ENCODE measurements at regions of chr12 and their contacts with region 1.

Region 1: GRCh38 chr12:49060237-49061156 is at the start of gene KMT2D:
- DNase-seq: peak; percentile 89 to 93 (median 92)
- H3K4me3 ChIP-seq: peak within 1 kb of the TSS; percentile 93 to 97
- H3K4me3 Mint-ChIP-seq: peak within 1 kb of the TSS; percentile 94 to 96 (median 95)
- H3K27ac ChIP-seq: peak within 1 kb of the TSS; percentile 90
- H3K27ac Mint-ChIP-seq: peak within 1 kb of the TSS; percentile 95 to 99 (median 98)
- H3K4me1 ChIP-seq: peaks cover 47% of the 10 kb centered on the region
- H3K4me1 Mint-ChIP-seq: peaks cover 43 to 60% (median 49%) of the 10 kb centered on the region in 4 donors
- H3K27me3 ChIP-seq: no peaks in the 10 kb centered on the region
- H3K27me3 Mint-ChIP-seq: no peaks in the 10 kb centered on the region
- total RNA-seq, gene KMT2D: 133 to 159 TPM

Region 2: GRCh38 chr12:48995061-48995879 is 65.2 kb before region 1 on chr12:
- CTCF ChIA-PET with region 1: no interaction called
- POLR2A ChIA-PET with region 1: interaction called, 4 read pairs
- intact Hi-C with region 1: loop called (anchors 5 kb)
- DNase-seq: peak; percentile 31 to 53 (median 40)
- H3K4me3 ChIP-seq: no peak overlapping the region
- H3K4me3 Mint-ChIP-seq: peak overlapping the region in 6 of 8 donors; percentile 47 to 92 (median 69)
- H3K27ac ChIP-seq: no peak overlapping the region
- H3K27ac Mint-ChIP-seq: peak overlapping the region in 5 of 7 donors; percentile 51 to 93 (median 89)
- H3K4me1 ChIP-seq: peaks cover 40% of the 10 kb centered on the region
- H3K4me1 Mint-ChIP-seq: peaks cover 13 to 44% (median 25%) of the 10 kb centered on the region in 4 donors
- H3K27me3 ChIP-seq: peaks cover 18% of the 10 kb centered on the region
- H3K27me3 Mint-ChIP-seq: peaks cover 34 to 43% of the 10 kb centered on the region in 2 donors

Region 3: GRCh38 chr12:49049566-49050413 is 10.7 kb before region 1 on chr12:
- CTCF ChIA-PET with region 1: interaction called, 26 read pairs
- POLR2A ChIA-PET with region 1: interaction called, 3 read pairs
- intact Hi-C with region 1: no loop called
- DNase-seq: no peak
- H3K4me3 ChIP-seq: no peak overlapping the region
- H3K4me3 Mint-ChIP-seq: no peak overlapping the region
- H3K27ac ChIP-seq: no peak overlapping the region
- H3K27ac Mint-ChIP-seq: no peak overlapping the region
- H3K4me1 ChIP-seq: peaks cover 3% of the 10 kb centered on the region
- H3K4me1 Mint-ChIP-seq: peaks cover 7 to 25% (median 9%) of the 10 kb centered on the region in 4 donors
- H3K27me3 ChIP-seq: no peaks in the 10 kb centered on the region
- H3K27me3 Mint-ChIP-seq: no peaks in the 10 kb centered on the region

Region 4: GRCh38 chr12:49088190-49088931 is 27.9 kb after region 1 on chr12:
- CTCF ChIA-PET with region 1: interaction called, 221 read pairs
- POLR2A ChIA-PET with region 1: interaction called, 9 read pairs
- intact Hi-C with region 1: loop called (anchors 1 kb)
- DNase-seq: peak; percentile 68 to 73 (median 69)
- H3K4me3 ChIP-seq: no peak overlapping the region
- H3K4me3 Mint-ChIP-seq: peak overlapping the region in 7 of 8 donors; percentile 17 to 83 (median 56)
- H3K27ac ChIP-seq: no peak overlapping the region
- H3K27ac Mint-ChIP-seq: peak overlapping the region in 4 of 7 donors; percentile 2 to 67 (median 37)
- H3K4me1 ChIP-seq: peaks cover 56% of the 10 kb centered on the region
- H3K4me1 Mint-ChIP-seq: peaks cover 23 to 66% (median 40%) of the 10 kb centered on the region in 4 donors
- H3K27me3 ChIP-seq: peaks cover 41% of the 10 kb centered on the region
- H3K27me3 Mint-ChIP-seq: peaks cover 26 to 41% of the 10 kb centered on the region in 2 donors

Region 5: DNA sequence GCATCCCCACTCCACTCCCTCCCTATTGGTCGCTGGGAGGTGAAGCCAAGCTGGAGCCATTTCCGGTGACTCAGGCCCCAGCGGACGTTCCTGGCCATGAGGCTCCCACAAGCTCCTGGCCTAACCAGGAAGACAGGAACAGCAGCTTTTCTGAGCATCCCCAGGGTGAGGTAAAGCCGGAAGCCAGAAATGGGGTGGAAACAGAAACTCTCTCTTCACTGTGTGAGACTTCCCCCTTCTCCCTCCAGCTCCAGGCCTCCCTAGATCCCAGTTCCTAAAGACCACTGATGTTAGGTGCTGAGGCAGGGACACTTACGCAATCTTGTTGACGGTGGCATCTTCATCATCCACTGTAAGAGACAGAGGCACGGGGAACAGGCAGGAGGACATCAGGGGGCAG is 45.1 kb after region 1 on chr12:
- CTCF ChIA-PET with region 1: interaction called, 221 read pairs
- POLR2A ChIA-PET with region 1: interaction called, 12 read pairs
- intact Hi-C with region 1: no loop called
- DNase-seq: no peak
- H3K4me3 ChIP-seq: no peak overlapping the region
- H3K4me3 Mint-ChIP-seq: peak overlapping the region in 1 of 8 donors; percentile 25
- H3K27ac ChIP-seq: no peak overlapping the region
- H3K27ac Mint-ChIP-seq: no peak overlapping the region
- H3K4me1 ChIP-seq: peaks cover 15% of the 10 kb centered on the region
- H3K4me1 Mint-ChIP-seq: peaks cover 20 to 40% (median 31%) of the 10 kb centered on the region in 4 donors
- H3K27me3 ChIP-seq: no peaks in the 10 kb centered on the region
- H3K27me3 Mint-ChIP-seq: no peaks in the 10 kb centered on the region

Region 6: DNA sequence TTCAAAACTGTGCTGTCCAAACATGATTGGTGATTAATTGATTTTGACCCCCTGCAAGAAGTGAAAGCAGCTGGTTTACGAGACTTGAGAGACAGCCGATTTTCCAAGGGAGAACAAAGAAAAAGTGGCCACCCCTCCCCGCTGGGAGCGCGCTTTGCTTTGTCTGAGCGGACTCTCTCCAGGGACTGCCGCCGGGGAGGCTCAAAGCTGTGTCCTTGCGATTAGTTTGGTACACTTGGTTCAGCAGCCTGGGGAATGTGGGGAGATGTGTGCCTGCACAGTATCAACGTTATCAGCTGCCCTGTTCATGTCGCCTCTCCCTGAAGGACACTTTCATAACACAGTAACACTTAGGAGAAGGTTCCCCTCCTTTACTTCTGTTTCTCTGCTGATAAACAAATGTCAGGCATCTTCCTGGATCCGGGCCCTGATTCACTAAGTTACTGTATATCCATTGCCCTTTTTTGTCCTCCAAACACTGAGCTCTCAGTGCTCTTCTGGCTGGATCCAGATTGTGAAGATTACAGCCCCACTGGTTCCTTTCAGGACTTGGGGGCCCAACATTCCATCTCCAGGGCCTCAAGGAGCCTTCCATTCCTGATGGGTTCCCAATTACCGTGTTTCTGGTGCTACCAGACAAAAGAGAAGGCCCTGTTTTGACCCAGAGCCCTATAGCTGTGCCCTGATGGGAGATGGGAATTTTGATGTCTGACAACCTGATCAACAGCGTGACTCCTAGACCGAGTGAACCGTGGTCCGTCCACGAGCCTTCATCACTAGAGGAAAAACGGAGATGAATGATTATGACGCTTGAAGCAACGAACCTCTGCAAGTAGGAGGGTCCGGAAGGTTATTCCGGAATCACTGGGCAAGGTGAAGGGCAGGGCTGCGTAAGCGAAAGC is 172.7 kb after region 1 on chr12:
- CTCF ChIA-PET with region 1: interaction called, 18 read pairs
- POLR2A ChIA-PET with region 1: interaction called, 10 read pairs
- intact Hi-C with region 1: loop called (anchors 1 kb)
- DNase-seq: no peak
- H3K4me3 ChIP-seq: no peak overlapping the region
- H3K4me3 Mint-ChIP-seq: peak overlapping the region; percentile 21 to 61 (median 53)
- H3K27ac ChIP-seq: no peak overlapping the region
- H3K27ac Mint-ChIP-seq: peak overlapping the region in 6 of 7 donors; percentile 33 to 81 (median 54)
- H3K4me1 ChIP-seq: no peaks in the 10 kb centered on the region
- H3K4me1 Mint-ChIP-seq: peaks cover 0 to 13% (median 6%) of the 10 kb centered on the region in 4 donors
- H3K27me3 ChIP-seq: no peaks in the 10 kb centered on the region
- H3K27me3 Mint-ChIP-seq: no peaks in the 10 kb centered on the region

Measured in CD4-positive, alpha-beta memory T cell (primary cell).